Naive thymus-derived CD4-positive, alpha-beta T cell (primary cell): ENCODE measurements at regions of chr18 and their contacts with region 1.

Region 1: DNA sequence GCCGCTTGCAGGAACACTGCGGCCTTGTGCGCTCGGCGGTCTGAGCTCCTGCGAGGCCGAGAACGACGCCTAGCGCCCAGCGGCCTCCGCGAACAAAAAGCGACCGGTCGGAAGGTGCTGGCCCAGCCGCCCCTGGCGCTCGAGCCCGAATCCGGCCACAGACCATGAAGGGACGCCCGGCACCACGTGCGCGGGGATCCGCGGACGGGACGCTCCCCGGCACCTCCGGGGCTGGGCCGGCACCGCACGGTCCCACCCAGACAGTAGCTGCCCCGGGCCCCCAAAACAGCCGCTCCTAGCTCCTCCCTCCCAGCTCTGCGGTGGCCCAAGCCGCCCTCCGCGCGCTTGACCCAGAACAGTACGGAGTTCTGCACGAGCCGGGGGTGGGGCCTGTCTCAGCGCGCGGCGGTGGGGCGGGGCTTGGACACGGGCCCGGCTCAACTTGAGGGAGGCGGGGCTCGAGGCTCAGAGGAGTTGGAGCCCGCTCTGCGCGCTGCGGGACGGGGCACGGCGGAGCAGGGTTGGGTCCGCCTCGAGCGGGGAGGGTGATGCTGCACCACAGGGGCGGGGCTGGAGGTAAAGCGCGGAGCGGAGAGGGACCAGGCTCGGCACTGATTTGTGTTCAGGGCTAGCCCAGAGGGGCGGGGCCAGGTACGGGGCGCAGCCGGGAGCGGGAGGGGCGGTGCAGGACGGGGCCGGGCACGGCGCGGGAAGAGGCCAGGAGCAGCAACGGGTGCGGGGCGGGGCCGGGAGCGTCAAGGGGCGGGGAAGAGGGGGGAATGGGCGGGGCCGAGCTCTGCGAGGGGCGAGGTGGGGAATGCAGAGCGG is 538 bp upstream of the IMPA2 start:
- DNase-seq: peak; percentile 86 to 98 (median 92)
- ATAC-seq: peak; percentile 95
- H3K4me3 ChIP-seq: peak overlapping the region; percentile 64
- H3K4me3 Mint-ChIP-seq: peak overlapping the region; percentile 62 to 89 (median 86)
- H3K27ac ChIP-seq: peak overlapping the region; percentile 56
- H3K27ac Mint-ChIP-seq: peak overlapping the region in 7 of 9 donors; percentile 26 to 80 (median 44)
- H3K4me1 ChIP-seq: peaks cover 0 to 5% of the 10 kb centered on the region in 2 donors
- H3K4me1 Mint-ChIP-seq: peaks cover 0 to 27% (median 13%) of the 10 kb centered on the region in 7 donors
- H3K27me3 ChIP-seq: no peaks in the 10 kb centered on the region
- H3K27me3 Mint-ChIP-seq: peaks cover 0 to 17% (median 0%) of the 10 kb centered on the region in 5 donors

Region 2: DNA sequence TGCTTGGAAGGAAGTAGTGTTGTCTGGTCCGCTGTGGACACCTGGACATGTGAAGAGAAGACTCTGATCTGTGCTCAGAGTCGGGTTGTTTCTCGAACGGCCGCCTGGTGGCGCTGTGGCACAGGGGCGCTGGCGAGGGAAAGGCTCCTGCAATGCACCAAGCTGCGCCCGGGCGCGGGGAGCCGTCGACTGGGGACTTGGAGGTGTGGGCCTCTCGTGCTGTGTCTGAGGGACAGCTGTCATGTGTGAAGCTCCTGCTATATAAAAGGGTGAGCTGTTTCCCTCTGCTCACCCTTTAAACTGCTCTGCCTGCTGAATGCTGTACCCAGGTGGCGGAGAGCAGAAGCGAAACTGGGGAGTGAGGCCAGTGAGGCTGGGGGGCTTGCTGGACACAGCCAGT is 247.7 kb before region 1 on chr18:
- CTCF ChIA-PET with region 1: no interaction called
- POLR2A ChIA-PET with region 1: no interaction called
- intact Hi-C with region 1: loop called in 1 of 2 experiments (anchors 5 kb)
- DNase-seq: peak; percentile 18 to 74 (median 49)
- ATAC-seq: peak; percentile 79
- H3K4me3 ChIP-seq: no peak overlapping the region
- H3K4me3 Mint-ChIP-seq: peak overlapping the region in 4 of 10 donors; percentile 14 to 37 (median 26)
- H3K27ac ChIP-seq: no peak overlapping the region
- H3K27ac Mint-ChIP-seq: no peak overlapping the region
- H3K4me1 ChIP-seq: no peaks in the 10 kb centered on the region
- H3K4me1 Mint-ChIP-seq: peaks cover 0 to 5% (median 0%) of the 10 kb centered on the region in 7 donors
- H3K27me3 ChIP-seq: peaks cover 0 to 5% of the 10 kb centered on the region in 2 donors
- H3K27me3 Mint-ChIP-seq: peaks cover 26 to 54% (median 31%) of the 10 kb centered on the region in 5 donors

Region 3: GRCh38 chr18:11908182-11909060 is 72.3 kb before region 1 on chr18 and contains the start of gene MPPE1:
- CTCF ChIA-PET with region 1: no interaction called
- POLR2A ChIA-PET with region 1: interaction called, 6 read pairs
- intact Hi-C with region 1: loop called (anchors 1 kb)
- DNase-seq: peak; percentile 77 to 88 (median 83)
- ATAC-seq: peak; percentile 95
- H3K4me3 ChIP-seq: peak within 1 kb of the TSS; percentile 94
- H3K4me3 Mint-ChIP-seq: peak within 1 kb of the TSS; percentile 90 to 97 (median 96)
- H3K27ac ChIP-seq: peak within 1 kb of the TSS; percentile 97
- H3K27ac Mint-ChIP-seq: peak within 1 kb of the TSS; percentile 93 to 97 (median 95)
- H3K4me1 ChIP-seq: peaks cover 8 to 9% of the 10 kb centered on the region in 2 donors
- H3K4me1 Mint-ChIP-seq: peaks cover 10 to 32% (median 24%) of the 10 kb centered on the region in 7 donors
- H3K27me3 ChIP-seq: no peaks in the 10 kb centered on the region
- H3K27me3 Mint-ChIP-seq: no peaks in the 10 kb centered on the region
- total RNA-seq, gene MPPE1: 61.9 to 88.0 (median 86.2) TPM

Region 4: DNA sequence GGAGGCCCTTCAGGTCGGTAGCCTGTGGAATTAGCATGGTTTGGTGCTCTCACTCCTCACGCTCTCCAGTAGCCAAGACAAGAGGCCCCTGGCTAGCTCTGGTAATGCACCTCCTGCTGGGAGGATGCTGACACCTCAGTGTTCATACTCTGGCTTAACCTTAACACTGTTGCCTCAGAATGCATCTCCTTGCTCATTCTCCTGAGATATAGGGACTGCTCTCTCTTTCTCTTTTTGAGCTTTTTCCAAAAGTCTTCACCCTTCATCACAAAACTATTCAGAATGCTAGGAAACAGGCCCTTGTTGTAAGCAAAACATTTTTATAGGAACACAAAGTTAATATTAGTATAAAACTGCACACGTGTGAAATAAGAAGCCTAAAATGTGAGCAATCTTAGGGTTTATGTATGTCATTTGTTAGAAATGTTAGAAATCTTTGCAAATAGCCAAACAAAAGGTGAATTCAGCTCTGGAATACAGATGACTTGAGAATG is 16.7 kb before region 1 on chr18:
- CTCF ChIA-PET with region 1: no interaction called
- POLR2A ChIA-PET with region 1: no interaction called
- intact Hi-C with region 1: no loop called
- DNase-seq: no peak
- ATAC-seq: no peak
- H3K4me3 ChIP-seq: no peak overlapping the region
- H3K4me3 Mint-ChIP-seq: no peak overlapping the region
- H3K27ac ChIP-seq: no peak overlapping the region
- H3K27ac Mint-ChIP-seq: peak overlapping the region in 1 of 9 donors; percentile 59
- H3K4me1 ChIP-seq: no peaks in the 10 kb centered on the region
- H3K4me1 Mint-ChIP-seq: no peaks in the 10 kb centered on the region
- H3K27me3 ChIP-seq: no peaks in the 10 kb centered on the region
- H3K27me3 Mint-ChIP-seq: peaks cover 0 to 5% (median 4%) of the 10 kb centered on the region in 5 donors

Region 5: DNA sequence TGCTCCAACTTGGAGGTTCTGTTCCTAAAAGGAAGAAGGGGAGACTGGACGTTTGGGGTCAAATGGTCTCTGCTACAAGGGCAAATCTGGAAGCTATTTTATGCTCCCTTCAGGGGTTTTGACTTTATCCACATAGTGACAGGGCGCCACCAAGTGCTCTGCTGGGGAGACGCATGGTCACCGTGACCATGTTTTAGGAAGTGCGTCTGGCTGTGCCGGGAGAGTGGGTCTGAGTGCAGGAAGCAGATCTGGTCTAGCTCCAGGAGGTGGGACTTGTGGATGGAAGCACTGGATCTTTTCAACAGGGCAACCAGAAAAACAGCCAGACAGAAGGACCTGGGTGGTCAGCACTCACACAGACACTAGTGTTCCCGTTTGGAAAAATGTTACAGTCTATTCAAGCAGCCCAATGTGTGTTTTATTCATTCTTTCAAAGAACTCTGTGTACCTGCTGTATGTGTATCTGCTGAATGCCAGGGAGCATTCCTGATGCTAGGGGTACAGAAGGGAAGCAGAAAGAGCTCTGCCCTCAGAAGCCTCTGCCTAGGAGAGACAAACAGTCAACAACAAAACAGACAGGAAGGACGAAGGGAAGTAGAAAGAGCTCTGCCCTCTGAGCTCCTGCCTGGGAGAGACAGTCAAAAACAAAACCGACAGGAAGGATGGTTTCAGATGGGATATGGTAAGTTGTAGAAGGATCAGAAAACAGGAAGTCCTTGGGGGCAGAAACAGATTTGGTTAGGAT is 14.8 kb after region 1 on chr18:
- CTCF ChIA-PET with region 1: interaction called, 4 read pairs
- POLR2A ChIA-PET with region 1: no interaction called
- intact Hi-C with region 1: loop called (anchors 1 kb)
- DNase-seq: peak; percentile 19 to 61 (median 50)
- ATAC-seq: peak; percentile 92
- H3K4me3 ChIP-seq: peak overlapping the region; percentile 3
- H3K4me3 Mint-ChIP-seq: peak overlapping the region; percentile 4 to 74 (median 58)
- H3K27ac ChIP-seq: no peak overlapping the region
- H3K27ac Mint-ChIP-seq: peak overlapping the region in 6 of 9 donors; percentile 4 to 79 (median 52)
- H3K4me1 ChIP-seq: peaks cover 0 to 6% of the 10 kb centered on the region in 2 donors
- H3K4me1 Mint-ChIP-seq: peaks cover 9 to 21% (median 14%) of the 10 kb centered on the region in 7 donors
- H3K27me3 ChIP-seq: no peaks in the 10 kb centered on the region
- H3K27me3 Mint-ChIP-seq: no peaks in the 10 kb centered on the region

Region 6: GRCh38 chr18:12049978-12050811 is 69.4 kb after region 1 on chr18:
- CTCF ChIA-PET with region 1: no interaction called
- POLR2A ChIA-PET with region 1: no interaction called
- intact Hi-C with region 1: no loop called
- DNase-seq: no peak
- ATAC-seq: peak; percentile 47
- H3K4me3 ChIP-seq: no peak overlapping the region
- H3K4me3 Mint-ChIP-seq: no peak overlapping the region
- H3K27ac ChIP-seq: no peak overlapping the region
- H3K27ac Mint-ChIP-seq: no peak overlapping the region
- H3K4me1 ChIP-seq: no peaks in the 10 kb centered on the region
- H3K4me1 Mint-ChIP-seq: peaks cover 0 to 11% (median 0%) of the 10 kb centered on the region in 7 donors
- H3K27me3 ChIP-seq: no peaks in the 10 kb centered on the region
- H3K27me3 Mint-ChIP-seq: peaks cover 0 to 27% (median 4%) of the 10 kb centered on the region in 5 donors

Region 7: DNA sequence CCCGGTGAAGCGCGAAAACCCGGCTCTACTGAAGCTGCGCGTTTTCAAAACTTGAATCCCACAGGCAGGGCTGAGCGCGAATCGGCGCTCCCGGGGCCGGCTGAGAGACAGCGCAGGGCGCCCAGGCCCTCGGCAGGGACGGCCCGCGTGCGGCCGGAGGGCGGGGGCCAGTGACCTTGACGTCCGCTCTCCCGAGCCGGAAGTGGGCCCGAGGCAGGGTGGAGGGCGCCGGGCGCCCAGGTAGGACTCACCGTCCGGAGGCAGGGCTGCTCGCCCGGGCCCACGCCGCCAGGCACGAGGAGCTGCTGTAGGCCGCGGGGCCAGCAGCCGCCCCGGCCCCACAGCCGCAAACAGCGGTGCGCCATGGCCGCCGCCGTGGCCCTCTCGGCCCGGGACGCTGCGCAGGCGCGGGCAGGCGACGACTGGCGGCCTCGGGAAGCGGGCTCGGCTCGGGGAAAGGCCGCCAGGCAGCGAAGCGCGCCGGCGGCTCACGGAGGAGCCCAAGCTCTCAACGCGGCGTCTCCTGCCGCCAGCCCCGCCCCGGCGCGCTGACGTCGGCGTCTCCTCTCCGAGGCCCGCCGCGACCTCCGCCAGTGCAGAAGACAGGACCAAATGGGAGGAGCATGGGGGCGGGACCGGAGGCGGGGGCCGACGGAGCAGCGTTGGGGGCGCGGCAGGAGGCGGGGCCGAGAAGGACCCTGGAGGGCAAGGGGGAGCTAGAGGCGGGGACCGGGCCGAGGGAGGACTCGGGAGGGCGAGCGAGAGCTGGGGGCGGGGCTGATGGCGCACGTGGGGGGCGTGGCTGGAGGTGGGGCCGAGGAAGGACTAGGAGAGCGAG is 396.2 kb after region 1 on chr18 and contains the start of gene AFG3L2:
- CTCF ChIA-PET with region 1: no interaction called
- POLR2A ChIA-PET with region 1: no interaction called
- intact Hi-C with region 1: loop called (anchors 1 kb)
- DNase-seq: peak; percentile 99 to 100 (median 100)
- ATAC-seq: peak; percentile 93
- H3K4me3 ChIP-seq: peak within 1 kb of the TSS; percentile 93
- H3K4me3 Mint-ChIP-seq: peak within 1 kb of the TSS; percentile 85 to 93 (median 92)
- H3K27ac ChIP-seq: peak within 1 kb of the TSS; percentile 97
- H3K27ac Mint-ChIP-seq: peak within 1 kb of the TSS; percentile 77 to 95 (median 90)
- H3K4me1 ChIP-seq: peaks cover 13 to 28% of the 10 kb centered on the region in 2 donors
- H3K4me1 Mint-ChIP-seq: peaks cover 32 to 52% (median 46%) of the 10 kb centered on the region in 7 donors
- H3K27me3 ChIP-seq: no peaks in the 10 kb centered on the region
- H3K27me3 Mint-ChIP-seq: peaks cover 0 to 22% (median 0%) of the 10 kb centered on the region in 5 donors
- total RNA-seq, gene AFG3L2: 26.3 to 42.3 (median 32.0) TPM

Region 8: DNA sequence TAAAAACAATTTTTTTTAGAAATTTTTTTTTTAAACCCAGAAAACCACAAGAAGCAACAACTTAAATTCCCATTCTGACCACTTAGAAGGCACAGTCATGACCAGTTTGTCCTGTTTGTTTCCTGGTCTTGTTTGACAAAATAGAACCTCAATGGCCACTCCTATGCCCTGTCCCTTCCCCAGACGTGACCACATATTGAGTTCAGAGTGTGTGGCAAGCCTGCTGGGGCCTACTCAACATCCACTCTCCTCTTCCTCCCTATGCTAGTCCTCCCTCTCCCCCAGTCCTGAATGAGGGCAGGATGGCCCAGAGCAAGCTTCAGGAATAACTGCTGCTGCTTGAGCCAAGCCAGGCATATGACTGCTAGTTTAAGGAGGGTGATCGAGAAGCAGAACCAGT is 516.5 kb after region 1 on chr18:
- CTCF ChIA-PET with region 1: no interaction called
- POLR2A ChIA-PET with region 1: no interaction called
- intact Hi-C with region 1: no loop called
- DNase-seq: no peak
- ATAC-seq: no peak
- H3K4me3 ChIP-seq: no peak overlapping the region
- H3K4me3 Mint-ChIP-seq: no peak overlapping the region
- H3K27ac ChIP-seq: no peak overlapping the region
- H3K27ac Mint-ChIP-seq: no peak overlapping the region
- H3K4me1 ChIP-seq: no peaks in the 10 kb centered on the region
- H3K4me1 Mint-ChIP-seq: peaks cover 0 to 2% (median 0%) of the 10 kb centered on the region in 7 donors
- H3K27me3 ChIP-seq: no peaks in the 10 kb centered on the region
- H3K27me3 Mint-ChIP-seq: no peaks in the 10 kb centered on the region

Region 9: DNA sequence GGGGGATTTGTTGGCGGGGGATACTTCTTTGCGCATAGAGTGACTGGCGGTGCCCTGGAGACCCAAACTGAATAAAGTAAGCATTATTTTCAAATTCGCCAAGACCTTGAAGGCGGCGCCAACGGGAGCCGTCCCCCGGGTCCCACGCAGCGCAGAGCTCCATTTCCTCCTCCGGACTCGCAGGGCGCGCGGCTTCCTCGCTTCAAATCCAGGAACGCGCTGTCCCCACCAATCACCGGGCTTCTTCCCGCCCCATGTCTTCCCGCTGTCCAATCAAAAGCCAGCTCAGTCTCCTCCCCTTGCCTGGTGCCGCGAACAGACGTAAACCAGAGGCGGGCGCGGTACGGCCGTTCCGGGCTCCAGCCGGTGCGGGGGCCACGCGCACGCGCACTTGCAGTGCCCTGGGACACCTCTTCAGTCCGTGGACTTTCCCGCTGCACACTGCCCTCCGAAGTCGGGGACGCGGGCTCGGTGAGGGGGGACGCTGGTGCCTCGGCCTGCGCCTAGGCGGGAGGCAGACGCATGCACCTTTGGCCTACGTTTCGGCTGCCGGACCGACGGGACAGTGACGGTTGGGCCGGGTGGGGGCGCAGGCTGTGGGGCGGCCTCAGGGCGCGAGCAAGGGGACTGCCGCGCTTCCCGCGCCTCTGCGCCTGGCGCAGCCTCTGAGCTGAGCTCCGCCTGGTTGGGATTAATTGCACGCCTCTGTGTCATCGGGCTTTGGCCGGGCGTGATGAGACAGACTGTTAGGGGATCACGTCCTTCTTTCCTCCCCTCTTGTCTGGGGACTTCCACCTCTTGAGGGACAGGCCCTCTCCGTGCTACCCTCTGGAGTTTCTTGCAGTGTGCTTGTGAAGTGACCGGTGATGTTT is 1010.4 kb after region 1 on chr18 and contains the start of gene CEP192:
- CTCF ChIA-PET with region 1: no interaction called
- POLR2A ChIA-PET with region 1: no interaction called
- intact Hi-C with region 1: loop called in 1 of 2 experiments (anchors 5 kb)
- DNase-seq: peak; percentile 90 to 99 (median 97)
- ATAC-seq: peak; percentile 99
- H3K4me3 ChIP-seq: peak within 1 kb of the TSS; percentile 85
- H3K4me3 Mint-ChIP-seq: peak within 1 kb of the TSS in 9 of 10 donors; percentile 90 to 99 (median 98)
- H3K27ac ChIP-seq: peak within 1 kb of the TSS; percentile 82
- H3K27ac Mint-ChIP-seq: peak within 1 kb of the TSS; percentile 88 to 97 (median 93)
- H3K4me1 ChIP-seq: peaks cover 27 to 29% of the 10 kb centered on the region in 2 donors
- H3K4me1 Mint-ChIP-seq: peaks cover 10 to 29% (median 20%) of the 10 kb centered on the region in 7 donors
- H3K27me3 ChIP-seq: no peaks in the 10 kb centered on the region
- H3K27me3 Mint-ChIP-seq: peaks cover 0 to 1% (median 0%) of the 10 kb centered on the region in 5 donors
- total RNA-seq, gene CEP192: 30.9 to 45.0 (median 39.7) TPM

Region 10: DNA sequence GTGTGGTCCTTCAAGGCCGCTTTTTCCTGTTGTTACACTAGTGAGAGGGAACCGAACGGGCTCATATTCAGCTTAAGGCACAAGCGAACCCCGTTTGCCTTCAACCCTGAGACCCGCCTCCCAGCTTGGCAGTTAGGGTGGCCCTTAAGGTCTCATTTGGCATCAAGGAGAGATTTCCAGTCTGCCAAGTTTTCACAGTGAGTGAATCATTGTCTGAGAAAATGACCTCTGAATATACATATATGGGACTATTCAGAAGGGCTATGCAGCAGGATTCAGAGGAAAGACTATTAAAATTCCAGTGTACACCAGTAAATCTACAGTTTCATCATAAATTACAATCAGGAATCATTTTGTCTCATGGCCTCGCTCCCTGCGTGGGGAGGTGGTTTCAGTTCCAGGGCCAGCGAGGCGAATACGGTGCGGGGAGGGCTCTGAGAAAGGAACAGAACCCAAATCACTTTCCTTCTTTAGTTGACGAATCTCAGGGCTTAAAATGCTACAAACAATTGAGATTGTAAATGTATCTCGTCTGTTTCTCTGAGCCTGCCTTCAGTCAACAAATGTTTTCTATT is 1514.2 kb after region 1 on chr18:
- CTCF ChIA-PET with region 1: no interaction called
- POLR2A ChIA-PET with region 1: no interaction called
- intact Hi-C with region 1: no loop called
- DNase-seq: no peak
- ATAC-seq: no peak
- H3K4me3 ChIP-seq: no peak overlapping the region
- H3K4me3 Mint-ChIP-seq: no peak overlapping the region
- H3K27ac ChIP-seq: no peak overlapping the region
- H3K27ac Mint-ChIP-seq: peak overlapping the region in 2 of 9 donors; percentile 11 to 58
- H3K4me1 ChIP-seq: no peaks in the 10 kb centered on the region
- H3K4me1 Mint-ChIP-seq: peaks cover 5 to 13% (median 8%) of the 10 kb centered on the region in 7 donors
- H3K27me3 ChIP-seq: no peaks in the 10 kb centered on the region
- H3K27me3 Mint-ChIP-seq: no peaks in the 10 kb centered on the region